Activated CD4-positive, alpha-beta memory T cell treated with anti-CD3 and anti-CD28 coated beads for 36 hours (primary cell): ENCODE measurements at regions of chr19 and their contacts with region 1.

Region 1: DNA sequence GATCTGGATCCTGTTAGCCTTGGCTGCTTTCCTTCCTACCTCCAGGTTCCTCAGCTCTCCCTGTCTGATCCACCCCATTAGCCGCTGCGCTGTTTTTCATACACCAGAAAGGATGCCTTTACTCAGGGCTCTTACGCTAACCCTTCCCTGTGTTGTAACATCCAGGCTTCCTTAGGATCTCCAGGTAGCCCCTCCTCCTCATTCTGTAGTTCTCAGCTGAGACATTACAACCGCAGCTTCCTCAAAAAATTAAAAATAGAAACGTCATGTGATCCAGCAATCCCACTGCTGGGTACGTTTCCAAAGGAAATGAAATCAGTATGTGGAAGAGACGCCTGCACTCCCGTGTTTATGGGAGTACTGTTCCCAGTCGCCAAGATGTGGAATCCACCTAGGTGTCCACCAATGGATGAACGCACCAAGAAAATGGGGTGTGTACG is 18.4 kb upstream of the MYADM start:
- DNase-seq: no peak
- H3K4me3 Mint-ChIP-seq: no peak overlapping the region
- H3K27ac Mint-ChIP-seq: no peak overlapping the region
- H3K4me1 Mint-ChIP-seq: peaks cover 5% of the 10 kb centered on the region
- H3K27me3 Mint-ChIP-seq: peaks cover 30% of the 10 kb centered on the region

Region 2: DNA sequence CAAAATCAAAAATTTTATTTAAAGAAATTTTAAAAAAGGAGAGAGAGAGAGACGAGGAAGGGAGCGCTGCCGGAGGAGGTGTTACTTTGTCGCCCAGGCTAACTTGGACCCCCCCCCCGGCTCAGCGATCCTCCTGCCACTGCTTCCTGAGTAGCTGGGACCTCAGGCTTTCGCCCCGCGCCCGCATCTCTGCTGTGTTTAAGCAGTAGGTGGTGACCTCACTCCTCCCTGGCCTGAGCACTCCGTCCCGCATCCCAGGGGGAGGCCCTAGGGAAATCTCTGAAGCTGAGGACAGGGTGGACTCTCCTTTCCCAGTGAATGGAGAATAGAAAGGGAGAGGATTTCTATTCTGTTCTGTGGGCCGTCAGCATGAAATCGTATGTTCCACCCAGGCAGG is 516.2 kb before region 1 on chr19:
- CTCF ChIA-PET with region 1: no interaction called
- POLR2A ChIA-PET with region 1: no interaction called
- intact Hi-C with region 1: no loop called
- DNase-seq: peak; percentile 45
- H3K4me3 Mint-ChIP-seq: peak overlapping the region; percentile 94
- H3K27ac Mint-ChIP-seq: no peak overlapping the region
- H3K4me1 Mint-ChIP-seq: peaks cover 11% of the 10 kb centered on the region
- H3K27me3 Mint-ChIP-seq: peaks cover 12% of the 10 kb centered on the region

Region 3: DNA sequence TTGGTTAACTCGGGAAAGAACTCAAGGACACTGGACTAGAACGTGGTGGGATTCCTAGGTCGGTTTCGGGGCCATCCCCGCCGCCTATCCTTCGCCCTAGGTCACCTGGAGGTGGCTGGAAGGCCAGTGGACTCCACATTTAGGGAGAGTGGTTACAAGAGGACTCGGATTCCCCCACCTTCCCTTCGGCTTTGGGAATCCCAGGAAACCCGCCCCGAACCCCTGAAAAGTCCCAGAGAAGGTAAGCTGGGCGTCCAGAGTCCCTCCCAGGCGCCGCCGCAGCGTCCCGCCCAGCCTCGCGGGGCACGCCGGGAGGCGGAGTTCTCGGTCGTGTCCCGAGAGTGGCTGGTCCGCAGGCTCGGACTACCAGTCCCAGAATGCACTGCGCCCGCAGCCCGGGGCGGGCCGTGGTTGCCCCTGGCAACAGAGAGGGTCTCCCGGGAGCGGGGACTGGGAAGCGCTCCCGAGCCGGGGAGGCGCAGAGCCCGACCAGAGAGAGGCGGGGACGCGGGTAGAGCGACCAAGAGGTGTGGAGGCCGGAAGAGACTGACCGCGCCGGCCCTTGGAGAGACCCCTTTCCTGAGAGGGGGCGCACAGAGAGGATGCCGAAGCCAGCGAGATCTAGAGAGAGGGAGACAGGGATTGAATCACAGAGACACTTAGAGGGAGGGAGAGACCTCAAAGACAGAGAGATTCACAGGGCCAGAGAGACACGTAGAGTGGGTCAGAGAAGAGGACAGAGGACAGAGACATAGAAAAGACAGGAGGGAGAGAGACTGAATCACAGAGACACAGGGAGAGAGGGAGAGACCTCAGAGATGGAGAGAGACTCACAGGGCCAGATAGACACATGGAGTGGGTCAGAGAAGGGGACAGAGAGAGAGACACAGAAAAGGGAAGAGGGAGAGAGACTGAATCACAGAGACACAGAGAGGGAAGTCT is 30.2 kb after region 1 on chr19:
- CTCF ChIA-PET with region 1: interaction called, 9 read pairs
- POLR2A ChIA-PET with region 1: no interaction called
- intact Hi-C with region 1: loop called (anchors 2 kb)
- DNase-seq: peak; percentile 87
- H3K4me3 Mint-ChIP-seq: no peak overlapping the region
- H3K27ac Mint-ChIP-seq: no peak overlapping the region
- H3K4me1 Mint-ChIP-seq: peaks cover 37% of the 10 kb centered on the region
- H3K27me3 Mint-ChIP-seq: peaks cover 13% of the 10 kb centered on the region

Region 4: GRCh38 chr19:54023191-54023590 is 173.9 kb after region 1 on chr19:
- CTCF ChIA-PET with region 1: interaction called, 37 read pairs
- POLR2A ChIA-PET with region 1: no interaction called
- intact Hi-C with region 1: no loop called
- DNase-seq: no peak
- H3K4me3 Mint-ChIP-seq: no peak overlapping the region
- H3K27ac Mint-ChIP-seq: no peak overlapping the region
- H3K4me1 Mint-ChIP-seq: peaks cover 4% of the 10 kb centered on the region
- H3K27me3 Mint-ChIP-seq: peaks cover 32% of the 10 kb centered on the region